Activated B cell treated with CpG ODN at 0.5 μM for 24 hours (primary cell): ENCODE measurements at regions of chr11 and their contacts with region 1.

Region 1: GRCh38 chr11:43643898-43644620 is 36.5 kb upstream of the HSD17B12 start:
- DNase-seq: peak; percentile 84
- ATAC-seq: peak; percentile 100
- H3K4me3 Mint-ChIP-seq: peak overlapping the region; percentile 96
- H3K27ac Mint-ChIP-seq: peak overlapping the region; percentile 89
- H3K4me1 Mint-ChIP-seq: peaks cover 14% of the 10 kb centered on the region
- H3K27me3 Mint-ChIP-seq: peaks cover 10% of the 10 kb centered on the region
- CTCF ChIP-seq: no peak

Region 2: GRCh38 chr11:42311514-42311913 is 1332.5 kb before region 1 on chr11:
- CTCF ChIA-PET with region 1: no interaction called
- POLR2A ChIA-PET with region 1: no interaction called
- intact Hi-C with region 1: no loop called
- DNase-seq: no peak
- ATAC-seq: no peak
- H3K4me3 Mint-ChIP-seq: no peak overlapping the region
- H3K27ac Mint-ChIP-seq: no peak overlapping the region
- H3K4me1 Mint-ChIP-seq: no peaks in the 10 kb centered on the region
- H3K27me3 Mint-ChIP-seq: no peaks in the 10 kb centered on the region
- CTCF ChIP-seq: no peak

Region 3: DNA sequence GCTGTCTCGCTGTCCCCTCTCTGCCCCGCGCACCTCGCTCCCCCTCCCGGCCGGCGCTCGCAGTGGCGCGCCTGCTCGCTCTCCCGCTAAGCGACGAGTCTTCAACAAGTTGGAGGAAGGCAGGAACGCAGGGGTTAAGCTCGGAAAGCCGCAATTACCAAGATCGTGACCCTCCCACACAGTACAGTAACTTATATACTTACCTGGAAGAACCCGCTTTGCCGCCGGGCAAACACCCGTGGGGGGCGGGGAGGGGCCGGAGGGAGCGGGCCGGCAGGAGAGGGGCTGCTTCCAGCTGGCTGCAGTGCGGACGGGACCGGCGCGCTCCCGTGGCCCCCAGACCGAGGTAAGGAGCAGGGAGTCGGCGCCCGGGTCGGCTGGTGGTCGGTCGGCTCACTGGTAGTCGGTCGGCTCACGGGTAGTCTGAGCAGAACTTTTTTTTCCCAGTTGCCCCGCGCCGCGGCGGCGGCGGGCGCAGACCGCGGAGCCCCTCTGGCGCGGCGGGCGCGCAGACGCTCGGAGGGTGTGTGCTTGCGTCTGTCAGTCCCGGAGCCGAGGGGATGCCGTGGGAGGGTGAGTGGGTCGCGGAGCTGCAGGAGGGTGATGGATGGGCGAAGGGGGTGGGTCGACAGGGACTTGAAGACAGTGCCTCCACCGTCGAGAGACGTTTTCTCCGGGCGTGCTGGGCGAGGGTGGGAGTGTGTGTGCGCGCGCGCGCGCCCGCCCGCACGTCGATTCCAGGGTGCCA is 64.7 kb before region 1 on chr11:
- CTCF ChIA-PET with region 1: no interaction called
- POLR2A ChIA-PET with region 1: no interaction called
- intact Hi-C with region 1: loop called (anchors 5 kb)
- DNase-seq: no peak
- ATAC-seq: peak; percentile 41
- H3K4me3 Mint-ChIP-seq: peak overlapping the region; percentile 81
- H3K27ac Mint-ChIP-seq: no peak overlapping the region
- H3K4me1 Mint-ChIP-seq: peaks cover 45% of the 10 kb centered on the region
- H3K27me3 Mint-ChIP-seq: peaks cover 76% of the 10 kb centered on the region
- CTCF ChIP-seq: no peak

Region 4: DNA sequence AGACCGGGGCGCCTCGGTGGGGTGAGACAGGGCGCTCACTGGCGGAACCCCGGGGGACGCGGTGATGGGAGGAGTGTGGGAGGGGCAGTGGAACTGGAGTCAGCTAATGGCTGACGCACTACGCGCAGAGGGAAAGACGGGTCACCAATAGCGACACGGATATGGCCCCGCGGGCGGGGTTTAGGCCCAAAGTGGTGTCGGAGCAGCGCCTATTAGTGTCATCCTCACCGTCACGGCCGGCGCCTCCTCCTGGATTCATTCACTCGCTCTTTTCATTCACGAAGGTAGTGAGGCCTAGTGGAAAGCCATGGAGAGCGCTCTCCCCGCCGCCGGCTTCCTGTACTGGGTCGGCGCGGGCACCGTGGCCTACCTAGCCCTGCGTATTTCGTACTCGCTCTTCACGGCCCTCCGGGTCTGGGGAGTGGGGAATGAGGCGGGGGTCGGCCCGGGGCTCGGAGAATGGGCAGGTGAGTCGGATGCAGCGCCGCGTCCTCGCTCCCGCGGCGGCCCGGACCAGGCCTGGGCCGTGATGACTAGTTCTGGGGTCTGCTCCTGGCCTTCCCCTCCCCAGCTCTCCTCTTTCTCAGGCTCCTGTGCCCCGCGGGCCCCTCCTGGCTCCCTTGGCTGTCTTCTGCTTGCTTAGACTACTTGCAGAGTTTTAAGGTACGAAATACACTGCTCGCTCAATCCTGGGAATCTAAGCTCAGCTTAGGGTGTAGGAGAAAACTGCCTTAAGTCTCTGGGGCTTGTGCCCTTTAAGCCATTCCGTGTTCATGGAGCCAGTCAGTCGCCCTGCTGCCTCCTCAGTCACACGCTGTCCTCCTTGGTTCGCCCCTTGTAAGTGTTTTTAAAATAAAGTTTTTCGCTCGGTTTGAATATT is 36.7 kb after region 1 on chr11 and contains the start of gene HSD17B12:
- CTCF ChIA-PET with region 1: no interaction called
- POLR2A ChIA-PET with region 1: interaction called, 10 read pairs
- intact Hi-C with region 1: loop called (anchors 1 kb)
- DNase-seq: peak; percentile 96
- ATAC-seq: peak; percentile 96
- H3K4me3 Mint-ChIP-seq: peak within 1 kb of the TSS; percentile 93
- H3K27ac Mint-ChIP-seq: peak within 1 kb of the TSS; percentile 92
- H3K4me1 Mint-ChIP-seq: peaks cover 38% of the 10 kb centered on the region
- H3K27me3 Mint-ChIP-seq: no peaks in the 10 kb centered on the region
- CTCF ChIP-seq: no peak
- total RNA-seq, gene HSD17B12: 56.8 and 58.3 TPM in 2 replicates

Region 5: GRCh38 chr11:43880640-43881159 is 236.6 kb after region 1 on chr11 and contains the start of gene ALKBH3:
- CTCF ChIA-PET with region 1: no interaction called
- POLR2A ChIA-PET with region 1: no interaction called
- intact Hi-C with region 1: loop called (anchors 1 kb)
- DNase-seq: peak; percentile 83
- ATAC-seq: peak; percentile 99
- H3K4me3 Mint-ChIP-seq: peak within 1 kb of the TSS; percentile 94
- H3K27ac Mint-ChIP-seq: peak within 1 kb of the TSS; percentile 74
- H3K4me1 Mint-ChIP-seq: peaks cover 20% of the 10 kb centered on the region
- H3K27me3 Mint-ChIP-seq: peaks cover 32% of the 10 kb centered on the region
- CTCF ChIP-seq: no peak
- total RNA-seq, gene ALKBH3: 28.3 and 40.5 TPM in 2 replicates